Endothelial cell of umbilical vein (primary cell): ENCODE measurements at regions of chr22 and their contacts with region 1.

Region 1: DNA sequence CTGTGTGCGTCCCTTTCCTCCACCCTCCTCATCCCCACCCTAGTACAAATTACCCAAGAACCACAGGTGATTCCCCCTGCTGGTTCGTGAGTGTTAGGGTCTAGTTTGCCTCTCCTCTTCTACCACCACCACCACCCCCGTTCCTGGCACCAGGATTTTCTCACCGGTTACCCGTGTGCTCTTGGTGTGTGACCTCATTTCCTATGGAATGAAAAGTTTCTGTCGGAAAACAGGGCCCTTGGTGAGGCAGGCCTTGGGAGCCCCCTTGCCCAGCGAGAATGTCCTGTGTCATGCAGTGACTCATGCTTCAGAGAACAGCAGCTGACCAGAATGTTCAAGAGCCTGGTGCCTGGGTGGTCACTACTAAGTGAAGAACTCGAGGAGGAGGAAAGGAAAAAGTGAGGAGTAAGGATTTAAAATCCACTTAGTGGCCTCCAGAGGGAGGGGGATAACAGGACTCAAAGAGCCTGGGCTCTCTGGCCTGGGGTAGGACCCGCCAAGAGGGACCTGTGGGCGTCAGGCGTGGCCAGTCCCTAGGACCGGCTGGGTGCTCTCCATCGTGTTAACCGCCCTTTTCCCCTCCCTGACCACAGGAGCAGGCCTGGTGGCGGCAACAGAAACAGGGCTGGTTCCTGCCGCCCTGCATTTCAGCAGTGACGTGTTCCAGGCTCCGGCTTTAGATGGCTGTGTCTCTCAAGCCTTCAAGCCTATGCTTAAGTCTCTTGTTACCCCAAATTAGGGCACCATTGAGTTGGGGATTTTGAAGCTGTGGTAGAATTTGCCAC is 30.2 kb downstream of the C22orf31 start:
- DNase-seq: peak; percentile 97
- H3K4me3 ChIP-seq: peak overlapping the region in 2 of 3 experiments; percentile 43 to 52
- H3K27ac ChIP-seq: peak overlapping the region; percentile 99
- H3K4me1 ChIP-seq: peaks cover 27% of the 10 kb centered on the region
- H3K27me3 ChIP-seq: no peaks in the 10 kb centered on the region
- CTCF ChIP-seq: peak in 1 of 2 donors; percentile 10
- POLR2A ChIP-seq: no peak

Region 2: DNA sequence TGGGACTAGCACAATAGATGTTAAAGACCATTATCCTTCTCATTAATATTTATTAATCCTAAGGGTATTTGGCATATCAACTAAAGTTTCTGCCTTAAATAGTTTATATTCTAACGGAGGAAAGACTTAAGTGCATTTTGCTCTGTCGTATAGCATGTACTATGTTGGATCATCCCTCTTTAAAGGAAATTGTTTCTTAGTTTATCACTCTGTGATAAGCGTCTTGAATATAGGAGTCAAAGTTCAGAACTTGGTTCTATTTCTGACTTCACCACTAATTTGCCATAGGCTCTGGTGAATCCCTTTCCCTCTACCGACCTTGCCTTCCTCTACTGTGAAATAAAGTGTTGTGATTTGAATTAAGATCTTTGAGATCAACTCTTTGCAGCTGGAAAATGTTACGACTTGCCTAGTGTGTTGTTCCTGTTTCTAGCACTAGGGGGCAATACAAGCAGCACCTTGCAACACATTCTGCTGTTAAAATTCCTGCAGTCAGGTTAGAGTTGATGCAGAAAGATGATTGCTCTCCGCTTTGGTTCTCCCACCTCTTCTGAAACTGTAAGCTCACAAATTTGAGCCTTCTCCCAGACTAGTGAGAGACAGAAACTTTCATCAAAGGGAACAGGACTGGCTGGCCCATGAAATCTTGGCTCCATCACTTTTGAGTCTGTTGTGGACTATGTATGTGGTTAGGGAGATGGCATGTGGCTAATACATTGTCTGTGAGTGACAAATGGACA is 175.9 kb before region 1 on chr22:
- CTCF ChIA-PET with region 1: interaction called, 256 read pairs
- POLR2A ChIA-PET with region 1: no interaction called
- dilution Hi-C with region 1: no loop called
- intact Hi-C with region 1: no loop called
- DNase-seq: peak; percentile 80
- H3K4me3 ChIP-seq: no peak overlapping the region
- H3K27ac ChIP-seq: no peak overlapping the region
- H3K4me1 ChIP-seq: no peaks in the 10 kb centered on the region
- H3K27me3 ChIP-seq: no peaks in the 10 kb centered on the region
- CTCF ChIP-seq: peak; percentile 74 to 79
- POLR2A ChIP-seq: no peak

Region 3: GRCh38 chr22:28882878-28883656 is 148.4 kb before region 1 on chr22 and contains the start of gene ZNRF3:
- CTCF ChIA-PET with region 1: interaction called, 8 read pairs
- POLR2A ChIA-PET with region 1: interaction called, 5 read pairs
- dilution Hi-C with region 1: no loop called
- intact Hi-C with region 1: loop called (anchors 1 kb)
- DNase-seq: peak; percentile 79
- H3K4me3 ChIP-seq: peak within 1 kb of the TSS; percentile 51 to 72 (median 54)
- H3K27ac ChIP-seq: no peak within 1 kb of the TSS
- H3K4me1 ChIP-seq: peaks cover 11% of the 10 kb centered on the region
- H3K27me3 ChIP-seq: no peaks in the 10 kb centered on the region
- CTCF ChIP-seq: no peak
- POLR2A ChIP-seq: peak; percentile 60
- total RNA-seq, gene ZNRF3: 4.4 and 5.2 TPM in 2 replicates

Region 4: GRCh38 chr22:28930357-28931007 is 100.9 kb before region 1 on chr22:
- CTCF ChIA-PET with region 1: no interaction called
- POLR2A ChIA-PET with region 1: interaction called, 3 read pairs
- dilution Hi-C with region 1: no loop called
- intact Hi-C with region 1: loop called (anchors 5 kb)
- DNase-seq: peak; percentile 55
- H3K4me3 ChIP-seq: no peak overlapping the region
- H3K27ac ChIP-seq: no peak overlapping the region
- H3K4me1 ChIP-seq: peaks cover 8% of the 10 kb centered on the region
- H3K27me3 ChIP-seq: no peaks in the 10 kb centered on the region
- CTCF ChIP-seq: no peak
- POLR2A ChIP-seq: no peak

Region 5: GRCh38 chr22:28978158-28978557 is 53.3 kb before region 1 on chr22:
- CTCF ChIA-PET with region 1: interaction called, 5 read pairs
- POLR2A ChIA-PET with region 1: no interaction called
- dilution Hi-C with region 1: no loop called
- intact Hi-C with region 1: loop called (anchors 1 kb)
- DNase-seq: no peak
- H3K4me3 ChIP-seq: no peak overlapping the region
- H3K27ac ChIP-seq: no peak overlapping the region
- H3K4me1 ChIP-seq: peaks cover 27% of the 10 kb centered on the region
- H3K27me3 ChIP-seq: no peaks in the 10 kb centered on the region
- CTCF ChIP-seq: no peak
- POLR2A ChIP-seq: no peak